ENCODE measurements at regions of chr3 and their contacts with region 1.

Region 1: GRCh38 chr3:12541631-12542030 is 3.7 kb downstream of the MKRN2OS start:
- DNase-seq: peak in 2 of 14 experiments; percentile 6 to 14
- ATAC-seq: no peak
- H3K4me3 ChIP-seq: no peak overlapping the region
- H3K4me3 Mint-ChIP-seq: no peak overlapping the region
- H3K27ac ChIP-seq: no peak overlapping the region
- H3K27ac Mint-ChIP-seq: no peak overlapping the region
- H3K4me1 ChIP-seq: no peaks in the 10 kb centered on the region
- H3K4me1 Mint-ChIP-seq: no peaks in the 10 kb centered on the region
- H3K27me3 ChIP-seq: no peaks in the 10 kb centered on the region
- H3K27me3 Mint-ChIP-seq: no peaks in the 10 kb centered on the region
- CTCF ChIP-seq: no peak

Region 2: DNA sequence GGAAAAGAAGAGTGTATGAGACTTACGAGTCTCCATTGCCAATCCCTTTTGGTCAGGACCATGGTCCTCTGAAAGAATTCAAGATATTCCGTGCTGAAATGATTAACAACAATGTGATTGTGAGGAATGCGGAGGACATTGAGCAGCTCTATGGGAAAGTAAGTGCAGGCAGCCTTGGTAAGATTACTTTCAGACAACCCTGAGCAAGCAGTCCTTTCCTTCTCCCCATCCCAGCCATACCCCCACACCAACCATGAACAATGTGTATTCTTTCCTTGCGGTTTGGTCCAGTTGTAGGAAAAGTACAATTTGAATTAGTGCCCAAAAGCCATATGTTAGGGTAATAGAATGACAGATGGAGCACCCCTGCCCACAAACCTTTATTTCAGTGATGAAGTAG is 51.8 kb before region 1 on chr3:
- CTCF ChIA-PET with region 1: no interaction called
- POLR2A ChIA-PET with region 1: no interaction called
- intact Hi-C with region 1: loop called in 1 of 2 experiments (anchors 2 kb)
- DNase-seq: no peak
- ATAC-seq: no peak
- H3K4me3 ChIP-seq: no peak overlapping the region
- H3K4me3 Mint-ChIP-seq: no peak overlapping the region
- H3K27ac ChIP-seq: no peak overlapping the region
- H3K27ac Mint-ChIP-seq: no peak overlapping the region
- H3K4me1 ChIP-seq: peaks cover 8% of the 10 kb centered on the region
- H3K4me1 Mint-ChIP-seq: peaks cover 29% of the 10 kb centered on the region
- H3K27me3 ChIP-seq: no peaks in the 10 kb centered on the region
- H3K27me3 Mint-ChIP-seq: no peaks in the 10 kb centered on the region
- CTCF ChIP-seq: no peak

Region 3: GRCh38 chr3:12841149-12841970 is 299.7 kb after region 1 on chr3 and contains the start of gene RPL32:
- CTCF ChIA-PET with region 1: no interaction called
- POLR2A ChIA-PET with region 1: no interaction called
- intact Hi-C with region 1: no loop called
- DNase-seq: peak; percentile 76 to 96 (median 82)
- ATAC-seq: peak; percentile 91
- H3K4me3 ChIP-seq: peak within 1 kb of the TSS; percentile 86
- H3K4me3 Mint-ChIP-seq: peak within 1 kb of the TSS; percentile 93
- H3K27ac ChIP-seq: peak within 1 kb of the TSS; percentile 90 to 94
- H3K27ac Mint-ChIP-seq: peak within 1 kb of the TSS; percentile 99
- H3K4me1 ChIP-seq: peaks cover 39% of the 10 kb centered on the region
- H3K4me1 Mint-ChIP-seq: peaks cover 55% of the 10 kb centered on the region
- H3K27me3 ChIP-seq: no peaks in the 10 kb centered on the region
- H3K27me3 Mint-ChIP-seq: no peaks in the 10 kb centered on the region
- CTCF ChIP-seq: peak; percentile 74
- total RNA-seq, gene RPL32: 4,308 to 4,667 TPM

Measured in CD4-positive, alpha-beta T cell (primary cell).